Mammary epithelial cell (primary cell): ENCODE measurements at regions of chr14 and their contacts with region 1.

Region 1: DNA sequence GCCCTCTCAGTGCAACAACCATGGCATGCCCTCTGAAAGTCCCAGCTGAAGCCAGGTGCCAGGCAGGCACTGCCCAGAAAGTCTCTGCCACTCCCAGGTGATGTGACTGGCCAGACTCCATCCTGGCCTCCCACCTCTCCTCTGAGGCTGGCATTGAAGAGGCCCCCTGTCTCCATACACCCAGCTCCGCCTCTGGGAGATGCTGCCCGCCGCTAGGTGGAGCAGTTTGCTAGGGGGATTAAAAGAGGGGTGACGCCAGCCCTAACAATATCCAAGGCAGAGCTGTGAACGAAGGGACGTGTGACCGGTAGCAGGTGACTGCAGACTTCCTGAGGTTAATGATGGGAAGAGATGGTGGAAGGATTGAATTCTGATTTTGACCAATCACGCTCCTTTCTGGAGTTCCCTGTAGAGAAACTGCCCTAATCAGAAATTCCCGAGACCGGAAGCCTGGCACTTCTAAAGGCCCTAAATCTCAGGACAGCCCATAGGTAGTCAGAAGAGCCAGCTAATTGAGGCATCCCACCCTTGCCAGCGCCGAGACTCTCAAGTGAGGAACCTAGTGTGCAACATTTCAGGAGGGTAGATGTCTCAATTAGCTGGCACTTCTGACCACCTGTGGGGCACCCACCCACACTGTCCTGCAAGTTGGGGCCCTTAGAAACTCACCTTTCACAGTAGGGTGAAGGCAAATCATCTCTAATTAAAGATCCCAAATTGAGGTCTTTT is 8.3 kb upstream of the PLEK2 start:
- DNase-seq: peak; percentile 14
- H3K4me3 ChIP-seq: no peak overlapping the region
- H3K27ac ChIP-seq: no peak overlapping the region
- H3K4me1 ChIP-seq: peaks cover 23% of the 10 kb centered on the region
- H3K27me3 ChIP-seq: no peaks in the 10 kb centered on the region
- CTCF ChIP-seq: peak; percentile 14 to 23

Region 2: DNA sequence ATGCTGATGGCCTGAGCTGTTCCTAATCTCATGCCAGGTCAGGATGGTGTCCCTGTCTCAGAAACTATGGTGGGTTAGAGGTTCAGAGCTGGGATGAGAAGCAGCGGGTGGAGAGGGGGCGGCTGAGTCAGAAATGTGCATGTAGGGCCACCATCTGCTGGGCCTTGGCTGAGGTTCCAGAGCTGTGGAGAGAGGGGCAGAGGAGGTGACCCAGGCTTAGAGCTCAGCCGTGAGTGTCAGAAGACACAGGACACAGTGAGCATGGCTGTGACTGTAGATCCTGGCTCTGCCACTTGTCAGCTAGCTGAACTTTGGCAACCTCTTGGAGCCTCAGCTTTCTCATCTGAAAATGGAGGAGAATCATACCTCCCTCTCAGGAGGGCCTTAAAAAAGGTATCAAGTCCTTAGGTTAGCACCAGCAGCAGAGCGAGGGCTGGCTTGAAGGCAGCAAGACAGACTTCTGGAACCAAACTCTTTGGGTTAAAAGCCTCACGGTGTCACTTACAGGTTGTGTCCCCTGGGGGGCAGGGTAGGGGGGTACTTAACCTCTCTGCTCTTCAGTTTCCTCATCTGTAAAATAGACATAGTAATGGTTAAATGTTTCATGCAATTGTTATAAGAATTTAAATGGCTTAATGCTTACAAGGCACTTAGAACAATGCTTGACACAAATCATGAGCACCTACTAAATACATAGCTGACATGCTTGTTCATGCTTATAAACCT is 33.5 kb after region 1 on chr14:
- CTCF ChIA-PET with region 1: no interaction called
- dilution Hi-C with region 1: no loop called
- in situ Hi-C with region 1: no loop called
- intact Hi-C with region 1: no loop called
- DNase-seq: no peak
- H3K4me3 ChIP-seq: no peak overlapping the region
- H3K27ac ChIP-seq: no peak overlapping the region
- H3K4me1 ChIP-seq: no peaks in the 10 kb centered on the region
- H3K27me3 ChIP-seq: no peaks in the 10 kb centered on the region
- CTCF ChIP-seq: no peak

Region 3: GRCh38 chr14:67467179-67468080 is 47.2 kb after region 1 on chr14:
- CTCF ChIA-PET with region 1: no interaction called
- dilution Hi-C with region 1: loop called (anchors 5 kb)
- in situ Hi-C with region 1: no loop called
- intact Hi-C with region 1: no loop called
- DNase-seq: no peak
- H3K4me3 ChIP-seq: no peak overlapping the region
- H3K27ac ChIP-seq: no peak overlapping the region
- H3K4me1 ChIP-seq: no peaks in the 10 kb centered on the region
- H3K27me3 ChIP-seq: no peaks in the 10 kb centered on the region
- CTCF ChIP-seq: peak; percentile 5 to 40